ENCODE measurements at regions of chr14 and their contacts with region 1.

Region 1: DNA sequence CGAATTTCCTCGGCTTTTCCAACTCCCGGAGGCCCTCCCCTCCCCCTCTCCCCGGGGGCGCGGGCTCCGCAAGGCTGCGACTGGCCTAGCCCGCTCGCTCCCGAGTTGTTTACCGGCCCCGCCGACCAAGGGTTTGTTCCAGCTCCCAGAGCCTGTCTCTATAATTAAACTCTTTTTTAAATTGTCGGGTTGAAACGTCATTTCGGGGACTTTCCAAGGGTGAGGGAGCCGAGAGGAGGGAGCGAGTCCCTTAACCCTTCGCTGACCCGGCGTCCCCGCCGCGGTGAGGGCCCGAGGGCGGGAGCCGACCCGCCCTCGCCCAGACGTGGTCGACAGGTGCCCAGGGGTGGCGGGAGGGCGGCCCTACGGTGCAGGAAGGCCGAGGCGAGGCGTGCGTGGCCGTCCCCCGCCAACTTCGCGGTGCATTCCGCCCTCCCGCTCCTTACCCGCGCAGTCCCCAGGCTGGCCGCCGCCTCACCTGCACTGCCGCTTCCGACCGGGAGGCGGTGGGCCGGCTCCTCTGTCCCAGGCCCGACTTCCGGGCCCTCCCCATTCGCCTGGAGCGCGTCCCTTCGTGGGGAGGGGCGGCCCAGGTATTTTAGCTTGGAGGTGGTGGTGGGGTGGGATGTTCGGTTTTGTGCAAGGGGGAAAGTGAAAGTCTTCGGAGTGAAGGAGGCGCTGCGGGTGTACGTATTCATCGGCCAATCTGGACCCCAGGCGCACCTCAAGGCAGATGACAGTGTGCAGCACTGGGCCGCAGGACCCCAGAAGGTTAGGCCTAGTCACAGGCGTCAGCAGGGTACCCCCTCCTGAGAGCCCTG is 2.9 kb upstream of the ZFP36L1 start:
- DNase-seq: peak; percentile 83
- ATAC-seq: peak; percentile 41
- H3K4me3 Mint-ChIP-seq: peak overlapping the region; percentile 100
- H3K27ac Mint-ChIP-seq: peak overlapping the region; percentile 99
- H3K4me1 Mint-ChIP-seq: peaks cover 48% of the 10 kb centered on the region
- H3K27me3 Mint-ChIP-seq: no peaks in the 10 kb centered on the region
- CTCF ChIP-seq: no peak

Region 2: GRCh38 chr14:68232300-68233055 is 563.3 kb before region 1 on chr14:
- CTCF ChIA-PET with region 1: no interaction called
- POLR2A ChIA-PET with region 1: interaction called, 11 read pairs
- intact Hi-C with region 1: no loop called
- DNase-seq: no peak
- ATAC-seq: peak; percentile 91
- H3K4me3 Mint-ChIP-seq: no peak overlapping the region
- H3K27ac Mint-ChIP-seq: no peak overlapping the region
- H3K4me1 Mint-ChIP-seq: peaks cover 2% of the 10 kb centered on the region
- H3K27me3 Mint-ChIP-seq: no peaks in the 10 kb centered on the region
- CTCF ChIP-seq: no peak

Region 3: GRCh38 chr14:68307014-68307789 is 488.6 kb before region 1 on chr14:
- CTCF ChIA-PET with region 1: no interaction called
- POLR2A ChIA-PET with region 1: interaction called, 43 read pairs
- intact Hi-C with region 1: no loop called
- DNase-seq: no peak
- ATAC-seq: no peak
- H3K4me3 Mint-ChIP-seq: no peak overlapping the region
- H3K27ac Mint-ChIP-seq: peak overlapping the region; percentile 84
- H3K4me1 Mint-ChIP-seq: peaks cover 72% of the 10 kb centered on the region
- H3K27me3 Mint-ChIP-seq: no peaks in the 10 kb centered on the region
- CTCF ChIP-seq: no peak

Region 4: DNA sequence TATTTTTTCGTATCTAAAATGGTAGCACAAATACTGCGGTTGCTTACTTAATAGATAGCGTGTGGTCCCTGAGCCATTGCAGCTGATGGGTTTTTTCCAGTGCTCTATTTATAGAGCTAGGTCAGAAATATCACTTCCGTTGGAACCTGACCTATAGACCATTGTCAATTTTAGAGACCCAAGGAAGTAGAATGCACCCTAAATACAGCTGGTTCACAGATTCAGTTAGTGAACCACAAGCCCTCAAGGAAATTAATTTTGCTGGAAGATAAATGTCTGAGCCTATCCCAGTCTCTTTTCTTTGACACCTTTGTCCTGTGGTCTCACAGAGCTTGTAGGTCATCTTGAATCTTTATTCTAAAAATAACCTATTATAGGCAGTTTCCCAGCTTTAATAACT is 394.0 kb before region 1 on chr14:
- CTCF ChIA-PET with region 1: no interaction called
- POLR2A ChIA-PET with region 1: interaction called, 350 read pairs
- intact Hi-C with region 1: loop called (anchors 1 kb)
- DNase-seq: no peak
- ATAC-seq: peak; percentile 59
- H3K4me3 Mint-ChIP-seq: peak overlapping the region; percentile 72
- H3K27ac Mint-ChIP-seq: peak overlapping the region; percentile 92
- H3K4me1 Mint-ChIP-seq: peaks cover 92% of the 10 kb centered on the region
- H3K27me3 Mint-ChIP-seq: no peaks in the 10 kb centered on the region
- CTCF ChIP-seq: no peak

Region 5: DNA sequence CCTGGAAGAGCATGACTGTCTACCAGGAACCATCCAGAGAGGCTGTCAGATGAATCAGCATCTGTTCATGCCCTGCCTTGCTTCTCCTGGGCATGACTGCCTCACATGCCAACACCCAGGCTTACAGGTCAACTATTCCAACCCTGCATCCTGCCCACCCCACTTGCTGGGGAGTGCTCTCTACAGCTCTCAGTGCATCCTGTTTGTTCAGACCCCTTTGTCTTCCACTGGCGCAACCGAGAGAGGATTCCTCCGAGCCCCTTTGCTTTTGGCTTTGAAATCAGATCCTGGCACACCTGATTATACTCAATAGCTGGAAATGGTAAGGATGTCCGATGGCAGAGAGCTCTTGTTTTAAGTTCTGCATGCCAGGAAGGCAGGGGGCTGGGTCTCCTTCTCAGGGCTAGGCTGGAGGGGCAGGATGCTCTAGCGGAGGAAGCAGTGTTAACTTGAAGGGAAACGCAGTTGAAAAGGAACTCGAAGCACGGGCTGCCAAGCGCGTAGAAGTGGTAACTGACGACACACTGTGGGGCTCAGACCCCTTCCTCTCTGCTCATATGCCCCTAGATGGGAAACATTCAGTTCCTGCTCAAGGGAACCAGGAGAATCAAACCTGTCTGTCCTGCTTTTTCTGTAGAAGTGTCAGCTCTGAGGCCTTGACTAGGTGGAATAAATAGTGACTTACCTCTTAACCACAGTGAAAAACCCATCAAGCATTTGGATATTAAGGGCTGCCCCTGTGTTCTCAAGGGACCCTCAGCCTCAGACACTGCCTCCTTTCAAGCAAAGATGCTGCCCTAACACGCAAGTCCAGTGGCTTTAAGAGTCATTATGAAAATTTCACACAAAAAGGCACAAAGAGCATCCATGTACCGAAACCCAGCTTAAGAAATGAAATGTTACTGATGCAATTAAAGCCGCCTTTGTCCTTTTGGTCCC is 300.4 kb before region 1 on chr14:
- CTCF ChIA-PET with region 1: no interaction called
- POLR2A ChIA-PET with region 1: interaction called, 585 read pairs
- intact Hi-C with region 1: loop called (anchors 1 kb)
- DNase-seq: no peak
- ATAC-seq: peak; percentile 92
- H3K4me3 Mint-ChIP-seq: peak overlapping the region; percentile 64
- H3K27ac Mint-ChIP-seq: peak overlapping the region; percentile 98
- H3K4me1 Mint-ChIP-seq: peaks cover 84% of the 10 kb centered on the region
- H3K27me3 Mint-ChIP-seq: no peaks in the 10 kb centered on the region
- CTCF ChIP-seq: no peak

Region 6: DNA sequence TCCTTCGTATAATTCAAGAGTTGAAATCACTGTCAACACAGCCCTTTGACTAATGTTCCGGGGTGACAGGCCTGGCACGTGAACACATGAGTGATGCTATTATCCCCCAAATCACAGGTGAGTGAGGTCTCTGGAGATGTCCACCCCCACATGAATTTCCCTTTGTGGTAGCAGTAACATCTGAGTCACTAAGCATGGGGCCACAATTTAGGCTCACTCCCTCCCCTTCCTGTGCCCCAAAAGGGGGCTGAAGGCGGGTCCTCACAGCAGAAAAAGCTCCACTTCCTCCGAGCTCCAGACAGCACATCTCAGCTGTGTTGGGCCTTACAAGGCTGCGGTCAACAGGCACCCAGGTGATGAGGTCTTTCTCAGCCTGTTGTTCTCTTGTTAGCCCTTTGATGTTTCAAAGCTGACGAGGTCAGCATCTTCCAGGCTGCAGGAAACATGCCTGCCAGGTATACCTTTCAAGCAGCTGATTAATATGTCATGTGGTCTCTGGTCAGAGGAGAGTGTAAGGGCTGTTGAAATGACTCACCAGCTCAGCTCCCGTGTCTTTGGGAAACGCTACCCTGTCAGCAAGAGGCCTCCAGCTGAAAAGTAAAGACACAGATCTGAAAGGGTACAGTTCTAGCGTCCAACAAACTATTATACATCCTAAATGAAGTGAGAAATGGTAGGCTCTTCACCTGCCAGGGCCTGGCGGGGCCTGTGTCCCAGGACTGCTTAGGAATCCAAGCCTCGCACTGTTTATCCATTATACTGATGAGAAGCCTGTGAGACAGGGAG is 110.2 kb before region 1 on chr14:
- CTCF ChIA-PET with region 1: interaction called, 6 read pairs
- POLR2A ChIA-PET with region 1: interaction called, 604 read pairs
- intact Hi-C with region 1: loop called (anchors 1 kb)
- DNase-seq: peak; percentile 65
- ATAC-seq: peak; percentile 76
- H3K4me3 Mint-ChIP-seq: peak overlapping the region; percentile 73
- H3K27ac Mint-ChIP-seq: peak overlapping the region; percentile 97
- H3K4me1 Mint-ChIP-seq: peaks cover 87% of the 10 kb centered on the region
- H3K27me3 Mint-ChIP-seq: no peaks in the 10 kb centered on the region
- CTCF ChIP-seq: no peak

Region 7: DNA sequence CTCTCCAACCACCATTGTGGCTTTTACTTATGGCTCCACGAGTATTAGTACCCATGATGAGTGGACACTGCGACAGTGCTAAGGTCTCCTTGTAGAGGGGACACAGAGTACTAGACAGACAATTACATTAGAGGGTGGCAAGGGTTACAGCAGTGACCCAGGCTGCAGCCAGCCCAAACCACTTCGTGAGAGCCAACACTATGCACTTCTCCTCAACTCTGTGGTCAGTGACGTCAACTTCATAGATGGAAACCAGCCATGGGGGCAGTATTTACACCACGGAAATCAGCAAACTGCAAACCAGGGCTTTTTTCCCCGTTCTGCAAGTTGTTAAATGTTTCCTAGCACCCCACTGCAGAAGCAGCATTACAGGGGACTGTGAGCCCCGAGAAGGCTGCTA is 58.6 kb after region 1 on chr14:
- CTCF ChIA-PET with region 1: no interaction called
- POLR2A ChIA-PET with region 1: no interaction called
- intact Hi-C with region 1: no loop called
- DNase-seq: no peak
- ATAC-seq: no peak
- H3K4me3 Mint-ChIP-seq: no peak overlapping the region
- H3K27ac Mint-ChIP-seq: no peak overlapping the region
- H3K4me1 Mint-ChIP-seq: no peaks in the 10 kb centered on the region
- H3K27me3 Mint-ChIP-seq: no peaks in the 10 kb centered on the region
- CTCF ChIP-seq: no peak

Region 8: DNA sequence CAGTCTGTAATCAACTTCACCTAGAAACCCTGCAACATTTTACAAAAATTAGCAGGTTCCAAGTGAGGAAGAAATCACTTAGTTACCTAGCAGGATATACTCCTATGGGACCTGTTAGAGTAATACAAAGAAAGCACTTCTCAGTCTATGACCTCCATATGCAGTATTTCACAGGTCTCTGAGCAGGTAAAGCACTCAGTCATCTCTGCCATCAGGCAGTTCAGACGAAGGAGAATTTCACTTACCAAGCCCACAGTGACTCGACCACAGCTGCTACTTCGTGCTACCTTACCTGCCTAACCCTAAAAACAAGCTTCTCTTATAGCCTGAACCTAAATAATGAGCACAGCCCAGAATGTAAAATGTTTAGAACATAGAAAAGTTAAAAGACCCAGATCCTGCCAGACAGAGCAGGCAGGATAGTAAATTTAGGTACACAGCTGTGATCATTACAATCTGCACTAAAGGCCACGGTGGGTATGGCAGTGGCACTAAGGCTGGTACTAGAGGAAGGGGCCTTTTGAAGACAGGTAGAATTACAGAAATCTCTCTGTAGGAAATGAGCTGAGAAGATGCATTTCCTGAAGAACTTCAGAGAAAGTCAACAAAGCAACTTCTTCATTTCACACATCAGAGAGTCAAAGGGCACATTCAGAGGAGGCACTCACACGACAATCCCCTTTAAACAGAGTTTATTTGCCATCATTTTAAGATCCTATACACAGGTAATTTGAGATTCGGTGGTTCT is 321.4 kb after region 1 on chr14:
- CTCF ChIA-PET with region 1: no interaction called
- POLR2A ChIA-PET with region 1: interaction called, 11 read pairs
- intact Hi-C with region 1: no loop called
- DNase-seq: no peak
- ATAC-seq: no peak
- H3K4me3 Mint-ChIP-seq: no peak overlapping the region
- H3K27ac Mint-ChIP-seq: peak overlapping the region; percentile 30
- H3K4me1 Mint-ChIP-seq: peaks cover 16% of the 10 kb centered on the region
- H3K27me3 Mint-ChIP-seq: no peaks in the 10 kb centered on the region
- CTCF ChIP-seq: no peak